Mammary epithelial cell (primary cell): ENCODE measurements at regions of chr14 and their contacts with region 1.

Region 1: GRCh38 chr14:68408680-68409079 is 384.2 kb downstream of the ZFP36L1 start:
- DNase-seq: no peak
- H3K4me3 ChIP-seq: no peak overlapping the region
- H3K27ac ChIP-seq: no peak overlapping the region
- H3K4me1 ChIP-seq: peaks cover 44% of the 10 kb centered on the region
- H3K27me3 ChIP-seq: no peaks in the 10 kb centered on the region
- CTCF ChIP-seq: no peak

Region 2: DNA sequence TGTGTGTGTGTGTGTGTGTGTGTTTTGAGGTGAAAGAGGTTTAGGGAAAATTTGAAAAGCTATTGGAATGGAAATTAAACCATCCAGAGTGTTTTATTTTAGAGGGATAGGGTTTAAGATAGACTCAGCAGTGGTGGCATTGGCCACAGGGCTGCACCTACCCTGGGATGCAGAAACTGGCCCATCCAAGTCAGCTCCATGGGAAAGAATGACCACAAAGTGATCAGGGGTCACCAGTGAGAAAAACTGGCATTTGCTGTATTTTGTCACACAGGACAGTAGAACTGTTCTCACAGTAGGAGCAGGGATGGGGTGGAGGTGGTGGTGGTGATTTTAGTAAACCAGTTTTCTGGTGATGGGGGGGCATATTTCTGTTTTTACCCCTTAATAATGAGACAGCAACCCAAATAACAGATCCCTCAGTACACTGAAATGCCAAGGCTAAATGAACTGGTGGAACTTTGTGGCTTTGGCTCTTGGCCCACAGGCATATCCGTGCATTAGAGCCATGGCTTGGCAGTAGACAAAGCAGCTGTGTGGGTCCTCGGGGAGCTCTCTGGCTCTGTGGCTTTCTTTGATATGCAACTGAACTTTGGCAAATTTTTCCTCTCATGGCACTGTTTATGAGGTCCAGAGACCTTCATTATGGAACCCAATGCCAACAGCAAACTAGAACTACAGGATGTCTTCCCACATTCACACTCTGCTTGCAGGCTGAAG is 35.9 kb after region 1 on chr14:
- CTCF ChIA-PET with region 1: interaction called, 10 read pairs
- dilution Hi-C with region 1: no loop called
- in situ Hi-C with region 1: no loop called
- intact Hi-C with region 1: no loop called
- DNase-seq: peak; percentile 46
- H3K4me3 ChIP-seq: no peak overlapping the region
- H3K27ac ChIP-seq: no peak overlapping the region
- H3K4me1 ChIP-seq: peaks cover 30% of the 10 kb centered on the region
- H3K27me3 ChIP-seq: no peaks in the 10 kb centered on the region
- CTCF ChIP-seq: no peak